ENCODE measurements at regions of chr12 and their contacts with region 1.

Region 1: DNA sequence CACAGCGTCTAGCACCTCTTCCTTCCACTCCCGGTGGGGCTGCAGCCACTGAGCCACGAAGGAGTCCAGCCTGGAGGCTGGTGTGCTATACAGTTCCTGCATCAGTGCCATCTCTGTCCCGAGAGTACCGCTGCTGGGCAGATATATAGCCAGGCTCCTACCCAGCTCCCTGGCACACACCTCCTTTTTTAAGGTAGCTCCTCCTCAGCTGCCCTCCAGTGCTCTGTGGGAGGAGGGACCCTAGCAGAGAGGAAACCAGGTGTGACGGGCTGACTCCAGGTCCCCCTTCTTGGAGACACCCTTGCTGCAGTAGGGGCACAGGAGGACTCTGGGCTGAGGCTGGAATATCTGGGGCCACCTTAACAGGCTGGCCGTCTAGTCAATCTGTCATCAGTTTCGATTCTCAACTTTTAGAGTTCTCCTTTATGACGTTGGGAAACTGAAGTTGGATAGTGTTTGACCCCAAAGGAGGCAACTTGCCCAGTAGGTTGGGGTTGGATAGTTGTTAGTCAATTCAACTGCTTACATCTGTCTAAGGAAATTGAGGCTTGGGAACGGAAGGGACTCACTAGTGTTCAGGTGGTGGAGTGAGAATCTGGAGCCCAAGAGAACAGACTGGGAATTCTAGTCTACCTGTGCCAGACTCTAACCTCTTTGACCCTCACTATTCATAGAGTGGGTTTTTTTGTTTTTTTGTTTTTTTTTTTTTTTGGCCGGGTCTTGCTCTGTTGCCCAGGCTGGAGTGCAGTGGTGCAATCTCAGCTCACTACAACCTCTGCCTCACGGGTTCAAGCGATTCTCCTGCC is at the start of gene OASL:
- DNase-seq: peak; percentile 48
- ATAC-seq: peak; percentile 96
- H3K4me3 Mint-ChIP-seq: peak within 1 kb of the TSS; percentile 91
- H3K27ac Mint-ChIP-seq: peak within 1 kb of the TSS; percentile 77
- H3K4me1 Mint-ChIP-seq: peaks cover 17% of the 10 kb centered on the region
- H3K27me3 Mint-ChIP-seq: peaks cover 37% of the 10 kb centered on the region
- CTCF ChIP-seq: no peak
- total RNA-seq, gene OASL: 0.86 and 1.4 TPM in 2 replicates

Region 2: DNA sequence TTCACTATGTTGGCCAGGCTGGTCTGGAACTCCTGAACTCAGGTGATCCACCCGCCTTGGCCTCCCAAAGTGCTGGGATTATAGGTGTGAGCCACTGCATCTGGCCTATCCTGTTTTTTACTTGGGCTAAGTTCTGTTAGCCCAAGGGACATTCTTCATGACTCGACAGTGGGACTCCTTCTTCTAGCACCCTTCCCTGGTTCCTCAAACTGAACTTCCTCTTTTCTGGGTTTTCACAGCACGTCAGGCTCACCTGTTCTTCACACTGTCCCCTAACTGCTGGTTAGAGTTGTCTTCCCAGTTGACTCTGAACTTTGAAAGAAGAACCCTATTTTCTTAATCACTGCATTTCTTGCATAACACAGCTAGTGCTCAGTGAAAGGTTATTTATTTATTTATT is 376.2 kb before region 1 on chr12:
- CTCF ChIA-PET with region 1: no interaction called
- POLR2A ChIA-PET with region 1: interaction called, 15 read pairs
- intact Hi-C with region 1: no loop called
- DNase-seq: no peak
- ATAC-seq: peak; percentile 96
- H3K4me3 Mint-ChIP-seq: peak overlapping the region; percentile 48
- H3K27ac Mint-ChIP-seq: peak overlapping the region; percentile 42
- H3K4me1 Mint-ChIP-seq: peaks cover 32% of the 10 kb centered on the region
- H3K27me3 Mint-ChIP-seq: no peaks in the 10 kb centered on the region
- CTCF ChIP-seq: no peak

Region 3: DNA sequence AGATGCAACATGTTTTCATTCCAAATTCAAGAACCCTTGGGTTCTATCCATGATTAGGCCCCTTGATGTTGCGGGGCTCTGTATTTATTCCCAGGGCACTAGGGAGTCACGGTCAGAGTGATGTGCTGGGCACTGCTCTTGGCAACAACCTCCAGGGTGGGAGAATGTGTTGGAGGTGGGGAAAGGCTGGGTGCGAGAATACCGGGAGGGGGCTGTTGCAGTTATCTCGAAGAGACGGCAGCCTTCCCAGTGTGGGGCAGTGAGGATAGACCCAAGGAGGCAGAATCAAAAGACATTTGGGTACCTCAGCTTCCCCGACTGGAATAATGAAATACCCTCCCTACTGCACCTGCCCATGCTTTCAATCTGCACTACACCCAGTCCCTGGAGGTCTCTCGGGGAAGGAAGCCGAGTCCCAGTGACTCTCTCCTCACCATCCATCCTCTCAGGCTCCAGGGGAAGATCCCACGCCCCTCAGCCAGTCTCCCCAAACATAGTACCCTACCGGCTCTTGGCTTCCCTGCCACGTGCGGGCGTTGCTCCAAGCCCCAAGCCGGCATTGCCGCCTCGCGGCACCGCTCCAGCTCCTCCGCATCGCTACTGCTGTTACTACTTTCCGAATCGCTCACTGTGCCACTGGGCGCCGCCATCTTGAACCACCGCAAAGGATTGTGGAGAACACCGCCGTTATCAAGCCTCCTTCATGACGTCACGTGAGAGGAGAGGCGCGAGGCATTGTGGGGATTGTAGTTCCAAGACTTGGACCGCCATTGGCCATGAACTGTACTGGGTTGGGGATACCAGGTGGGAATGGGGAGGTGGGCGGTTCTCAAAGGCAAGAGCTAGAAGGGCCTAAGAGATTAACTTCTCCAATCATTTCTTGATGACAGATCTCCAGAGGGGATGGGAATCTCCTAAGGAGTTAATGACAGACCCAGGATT is 23.0 kb before region 1 on chr12 and contains the start of gene C12orf43:
- CTCF ChIA-PET with region 1: no interaction called
- POLR2A ChIA-PET with region 1: no interaction called
- intact Hi-C with region 1: loop called (anchors 1 kb)
- DNase-seq: peak; percentile 80
- ATAC-seq: peak; percentile 98
- H3K4me3 Mint-ChIP-seq: peak within 1 kb of the TSS; percentile 100
- H3K27ac Mint-ChIP-seq: peak within 1 kb of the TSS; percentile 97
- H3K4me1 Mint-ChIP-seq: peaks cover 16% of the 10 kb centered on the region
- H3K27me3 Mint-ChIP-seq: no peaks in the 10 kb centered on the region
- CTCF ChIP-seq: no peak
- total RNA-seq, gene C12orf43: 23.7 and 24.8 TPM in 2 replicates

Region 4: GRCh38 chr12:121026274-121027045 is 12.6 kb before region 1 on chr12:
- CTCF ChIA-PET with region 1: no interaction called
- POLR2A ChIA-PET with region 1: interaction called, 12 read pairs
- intact Hi-C with region 1: no loop called
- DNase-seq: no peak
- ATAC-seq: no peak
- H3K4me3 Mint-ChIP-seq: no peak overlapping the region
- H3K27ac Mint-ChIP-seq: no peak overlapping the region
- H3K4me1 Mint-ChIP-seq: no peaks in the 10 kb centered on the region
- H3K27me3 Mint-ChIP-seq: peaks cover 6% of the 10 kb centered on the region
- CTCF ChIP-seq: no peak